Prostate gland (tissue), 2 donors: ENCODE measurements at regions of chr10 and their contacts with region 1.

Region 1: DNA sequence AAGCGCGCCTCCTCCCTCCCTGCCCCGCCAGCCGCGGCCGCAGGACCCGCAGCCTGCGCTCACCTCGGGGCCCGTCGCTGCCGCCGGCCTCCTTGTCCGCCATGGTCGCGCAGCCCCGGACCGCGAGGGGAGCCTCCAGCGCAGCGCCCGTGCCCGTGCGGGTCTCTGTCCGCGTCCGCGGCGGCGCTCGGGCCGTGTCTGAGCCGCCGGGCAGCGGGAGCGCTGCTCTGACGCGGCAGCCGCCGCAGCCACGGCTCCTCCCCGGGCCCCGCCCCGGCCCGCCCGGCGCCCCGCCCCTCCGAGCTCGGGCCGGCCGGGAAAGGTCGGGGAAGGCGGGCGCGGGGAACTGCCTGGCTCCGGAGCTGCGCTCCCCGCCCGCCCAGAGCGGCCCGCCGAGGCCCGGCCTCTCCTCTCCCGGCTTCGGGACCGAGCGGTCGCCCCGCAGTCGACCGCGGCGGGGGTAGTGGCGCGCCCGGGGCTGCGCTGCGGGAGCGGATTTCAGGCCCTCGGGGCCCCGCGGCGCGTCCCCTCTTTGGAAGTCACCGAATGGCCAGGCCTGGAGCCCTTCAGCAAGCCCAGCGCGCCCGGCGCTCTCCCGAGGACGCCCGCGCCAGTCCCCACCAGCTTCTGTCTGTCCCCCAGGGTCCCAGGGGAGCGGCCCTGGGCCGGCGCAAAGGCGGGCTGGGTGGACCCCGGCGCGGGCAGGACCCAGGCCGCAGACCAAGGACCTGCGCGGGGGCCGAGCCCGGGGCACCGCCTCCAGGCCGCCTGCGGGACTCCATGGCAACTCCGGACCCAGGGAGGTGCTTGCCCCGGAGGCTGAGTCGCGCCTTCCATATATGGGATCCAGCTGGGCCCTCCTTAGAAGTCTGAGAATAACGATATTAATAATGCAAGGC is at the start of gene HSPA12A:
- DNase-seq: peak; percentile 64
- H3K4me3 ChIP-seq: peak within 1 kb of the TSS; percentile 72 to 87
- H3K27ac ChIP-seq: peak within 1 kb of the TSS; percentile 79 to 81
- H3K4me1 ChIP-seq: peaks cover 4% of the 10 kb centered on the region
- H3K27me3 ChIP-seq: no peaks in the 10 kb centered on the region
- CTCF ChIP-seq: no peak
- POLR2A ChIP-seq: peak; percentile 75
- total RNA-seq, gene HSPA12A: 5.7 to 19.4 TPM

Region 2: GRCh38 chr10:116690356-116691322 is 52.0 kb before region 1 on chr10:
- intact Hi-C with region 1: loop called (anchors 5 kb)
- DNase-seq: no peak
- H3K4me3 ChIP-seq: no peak overlapping the region
- H3K27ac ChIP-seq: no peak overlapping the region
- H3K4me1 ChIP-seq: no peaks in the 10 kb centered on the region
- H3K27me3 ChIP-seq: no peaks in the 10 kb centered on the region
- CTCF ChIP-seq: peak in 2 of 4 experiments; percentile 16 to 23
- POLR2A ChIP-seq: no peak